CD4-positive, alpha-beta memory T cell (primary cell): ENCODE measurements at regions of chr5 and their contacts with region 1.

Region 1: DNA sequence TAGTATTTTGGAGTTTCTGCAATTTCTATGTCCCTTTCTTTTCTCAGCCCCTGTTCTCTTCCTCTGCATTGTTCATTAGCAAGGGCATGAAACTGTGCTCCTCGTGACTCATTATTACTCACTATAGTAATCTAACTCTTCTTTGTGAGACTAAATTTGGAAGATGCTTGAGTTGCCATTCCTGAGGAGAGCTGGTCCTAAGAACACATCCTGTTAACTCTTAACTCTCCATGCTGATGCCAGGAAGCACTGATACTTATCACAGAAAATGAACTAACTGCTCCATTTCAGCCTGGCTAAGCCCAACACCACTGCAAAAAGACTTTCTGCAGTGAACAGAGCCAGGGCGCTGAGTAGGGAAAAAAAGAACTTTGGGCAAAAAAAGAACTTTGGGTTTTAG is 10.6 kb upstream of the CSNK1A1 start:
- DNase-seq: no peak
- H3K4me3 ChIP-seq: no peak overlapping the region
- H3K4me3 Mint-ChIP-seq: peak overlapping the region in 2 of 8 donors; percentile 61 to 66
- H3K27ac ChIP-seq: no peak overlapping the region
- H3K27ac Mint-ChIP-seq: no peak overlapping the region
- H3K4me1 ChIP-seq: peaks cover 8% of the 10 kb centered on the region
- H3K4me1 Mint-ChIP-seq: peaks cover 8 to 16% (median 11%) of the 10 kb centered on the region in 4 donors
- H3K27me3 ChIP-seq: no peaks in the 10 kb centered on the region
- H3K27me3 Mint-ChIP-seq: no peaks in the 10 kb centered on the region

Region 2: GRCh38 chr5:149035372-149035790 is 526.5 kb before region 1 on chr5:
- CTCF ChIA-PET with region 1: no interaction called
- POLR2A ChIA-PET with region 1: no interaction called
- intact Hi-C with region 1: no loop called
- DNase-seq: peak; percentile 55 to 66 (median 57)
- H3K4me3 ChIP-seq: no peak overlapping the region
- H3K4me3 Mint-ChIP-seq: peak overlapping the region in 1 of 8 donors; percentile 22
- H3K27ac ChIP-seq: no peak overlapping the region
- H3K27ac Mint-ChIP-seq: peak overlapping the region in 1 of 7 donors; percentile 27
- H3K4me1 ChIP-seq: peaks cover 10% of the 10 kb centered on the region
- H3K4me1 Mint-ChIP-seq: peaks cover 3 to 38% (median 19%) of the 10 kb centered on the region in 4 donors
- H3K27me3 ChIP-seq: no peaks in the 10 kb centered on the region
- H3K27me3 Mint-ChIP-seq: peaks cover 0 to 3% of the 10 kb centered on the region in 2 donors

Region 3: DNA sequence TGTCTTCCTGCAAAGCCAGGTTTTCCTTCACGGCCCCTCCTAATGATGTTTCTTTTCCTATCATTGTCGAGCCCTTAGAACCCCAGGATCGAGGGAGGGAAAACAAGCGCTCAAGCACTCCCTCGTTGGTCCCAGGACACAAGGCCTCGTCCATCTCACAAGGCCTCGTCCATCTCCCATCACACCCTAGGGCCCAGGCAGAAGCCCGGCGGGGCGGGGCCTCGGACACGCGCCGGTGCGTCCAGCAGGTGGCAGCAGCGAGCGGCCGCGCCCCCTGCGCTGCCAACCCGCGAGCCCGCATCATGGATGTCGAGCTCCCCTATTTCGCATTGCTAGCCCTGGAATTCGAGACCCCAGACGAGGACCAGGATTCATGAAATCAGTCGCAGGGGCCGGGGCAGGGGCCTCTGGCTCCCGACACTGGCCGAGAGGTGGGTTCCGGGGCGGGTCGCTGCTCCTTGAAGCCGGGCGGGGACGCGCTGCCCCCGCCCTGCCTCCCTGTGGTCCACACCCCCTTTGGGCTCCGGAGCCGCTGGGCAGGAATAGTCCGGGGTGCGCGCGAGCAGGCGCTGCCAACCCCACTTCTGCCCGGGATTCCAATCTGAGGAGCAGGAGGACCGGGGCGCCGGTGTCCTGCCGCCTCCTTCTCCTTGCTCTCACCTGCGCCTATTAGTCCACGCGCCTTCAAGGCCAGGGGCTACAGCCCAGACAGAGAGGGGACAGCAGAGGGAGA is 420.5 kb before region 1 on chr5 and contains the start of gene ABLIM3:
- CTCF ChIA-PET with region 1: no interaction called
- POLR2A ChIA-PET with region 1: no interaction called
- intact Hi-C with region 1: loop called (anchors 10 kb)
- DNase-seq: peak; percentile 58 to 79 (median 68)
- H3K4me3 ChIP-seq: peak within 1 kb of the TSS in 1 of 2 donors; percentile 58
- H3K4me3 Mint-ChIP-seq: peak within 1 kb of the TSS; percentile 33 to 76 (median 56)
- H3K27ac ChIP-seq: no peak within 1 kb of the TSS
- H3K27ac Mint-ChIP-seq: peak within 1 kb of the TSS in 1 of 7 donors; percentile 36
- H3K4me1 ChIP-seq: peaks cover 10% of the 10 kb centered on the region
- H3K4me1 Mint-ChIP-seq: peaks cover 0 to 5% (median under 1%) of the 10 kb centered on the region in 4 donors
- H3K27me3 ChIP-seq: no peaks in the 10 kb centered on the region
- H3K27me3 Mint-ChIP-seq: peaks cover 4 to 18% of the 10 kb centered on the region in 2 donors
- total RNA-seq, gene ABLIM3: not detected

Region 4: GRCh38 chr5:149381987-149382340 is 179.9 kb before region 1 on chr5:
- CTCF ChIA-PET with region 1: interaction called, 84 read pairs
- POLR2A ChIA-PET with region 1: interaction called, 3 read pairs
- intact Hi-C with region 1: loop called (anchors 1 kb)
- DNase-seq: peak; percentile 50 to 56 (median 54)
- H3K4me3 ChIP-seq: no peak overlapping the region
- H3K4me3 Mint-ChIP-seq: no peak overlapping the region
- H3K27ac ChIP-seq: no peak overlapping the region
- H3K27ac Mint-ChIP-seq: peak overlapping the region in 3 of 7 donors; percentile 43 to 58 (median 53)
- H3K4me1 ChIP-seq: no peaks in the 10 kb centered on the region
- H3K4me1 Mint-ChIP-seq: peaks cover 0 to 4% (median 1%) of the 10 kb centered on the region in 4 donors
- H3K27me3 ChIP-seq: no peaks in the 10 kb centered on the region
- H3K27me3 Mint-ChIP-seq: peaks cover 3 to 4% of the 10 kb centered on the region in 2 donors

Region 5: DNA sequence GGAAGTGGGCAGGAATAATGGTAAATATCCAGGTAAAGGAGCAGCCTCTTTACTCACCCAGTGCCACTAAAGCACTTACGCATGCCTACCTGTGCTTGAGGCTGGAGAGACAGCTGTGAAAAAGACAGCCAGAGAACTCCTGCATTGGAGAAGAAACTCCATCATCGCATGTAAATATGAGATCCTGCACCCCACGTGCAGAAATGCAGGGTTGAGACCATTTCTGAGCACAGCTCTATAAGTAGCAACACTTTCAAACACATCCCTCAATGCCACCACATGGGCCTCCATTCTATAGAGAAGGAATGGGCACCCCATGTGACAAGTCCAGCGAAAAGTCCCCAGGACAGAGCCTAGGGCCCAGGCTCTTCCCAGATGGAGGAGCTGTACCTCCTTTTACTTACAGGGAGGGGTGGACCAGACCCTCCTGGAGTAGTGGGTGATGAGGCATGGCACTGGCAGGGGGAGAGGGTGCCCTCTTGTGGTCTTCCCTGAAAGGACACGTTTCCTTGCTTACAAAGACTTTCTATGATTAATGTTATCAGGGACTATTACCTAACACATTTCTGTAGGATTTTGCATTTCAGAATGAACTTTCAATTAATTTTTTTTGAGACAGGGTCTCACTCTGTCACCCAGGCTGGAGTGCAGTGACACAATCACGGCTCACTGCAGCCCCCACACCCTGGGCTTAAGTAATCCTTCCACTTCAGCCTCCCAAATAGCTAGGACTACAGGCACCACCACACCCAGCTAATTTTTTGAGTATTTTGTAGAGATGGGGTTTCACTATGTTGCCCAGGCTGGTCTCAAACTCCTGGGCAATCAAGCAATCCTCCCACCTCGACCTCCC is 127.5 kb before region 1 on chr5:
- CTCF ChIA-PET with region 1: interaction called, 68 read pairs
- POLR2A ChIA-PET with region 1: no interaction called
- intact Hi-C with region 1: loop called (anchors 2 kb)
- DNase-seq: peak in 4 of 5 donors; percentile 34 to 42 (median 38)
- H3K4me3 ChIP-seq: no peak overlapping the region
- H3K4me3 Mint-ChIP-seq: no peak overlapping the region
- H3K27ac ChIP-seq: no peak overlapping the region
- H3K27ac Mint-ChIP-seq: no peak overlapping the region
- H3K4me1 ChIP-seq: peaks cover 3% of the 10 kb centered on the region
- H3K4me1 Mint-ChIP-seq: peaks cover 0 to 11% (median 6%) of the 10 kb centered on the region in 4 donors
- H3K27me3 ChIP-seq: no peaks in the 10 kb centered on the region
- H3K27me3 Mint-ChIP-seq: no peaks in the 10 kb centered on the region

Region 6: GRCh38 chr5:149576021-149576420 is 14.2 kb after region 1 on chr5:
- CTCF ChIA-PET with region 1: interaction called, 13 read pairs
- POLR2A ChIA-PET with region 1: interaction called, 3 read pairs
- intact Hi-C with region 1: no loop called
- DNase-seq: peak in 2 of 5 donors; percentile 13 to 25
- H3K4me3 ChIP-seq: no peak overlapping the region
- H3K4me3 Mint-ChIP-seq: no peak overlapping the region
- H3K27ac ChIP-seq: no peak overlapping the region
- H3K27ac Mint-ChIP-seq: peak overlapping the region in 4 of 7 donors; percentile 65 to 87 (median 74)
- H3K4me1 ChIP-seq: peaks cover 15% of the 10 kb centered on the region
- H3K4me1 Mint-ChIP-seq: peaks cover 0 to 20% (median 15%) of the 10 kb centered on the region in 4 donors
- H3K27me3 ChIP-seq: no peaks in the 10 kb centered on the region
- H3K27me3 Mint-ChIP-seq: peaks cover 0 to 2% of the 10 kb centered on the region in 2 donors